GM12878 (cell line): ENCODE measurements at regions of chr17 and their contacts with region 1.

Region 1: DNA sequence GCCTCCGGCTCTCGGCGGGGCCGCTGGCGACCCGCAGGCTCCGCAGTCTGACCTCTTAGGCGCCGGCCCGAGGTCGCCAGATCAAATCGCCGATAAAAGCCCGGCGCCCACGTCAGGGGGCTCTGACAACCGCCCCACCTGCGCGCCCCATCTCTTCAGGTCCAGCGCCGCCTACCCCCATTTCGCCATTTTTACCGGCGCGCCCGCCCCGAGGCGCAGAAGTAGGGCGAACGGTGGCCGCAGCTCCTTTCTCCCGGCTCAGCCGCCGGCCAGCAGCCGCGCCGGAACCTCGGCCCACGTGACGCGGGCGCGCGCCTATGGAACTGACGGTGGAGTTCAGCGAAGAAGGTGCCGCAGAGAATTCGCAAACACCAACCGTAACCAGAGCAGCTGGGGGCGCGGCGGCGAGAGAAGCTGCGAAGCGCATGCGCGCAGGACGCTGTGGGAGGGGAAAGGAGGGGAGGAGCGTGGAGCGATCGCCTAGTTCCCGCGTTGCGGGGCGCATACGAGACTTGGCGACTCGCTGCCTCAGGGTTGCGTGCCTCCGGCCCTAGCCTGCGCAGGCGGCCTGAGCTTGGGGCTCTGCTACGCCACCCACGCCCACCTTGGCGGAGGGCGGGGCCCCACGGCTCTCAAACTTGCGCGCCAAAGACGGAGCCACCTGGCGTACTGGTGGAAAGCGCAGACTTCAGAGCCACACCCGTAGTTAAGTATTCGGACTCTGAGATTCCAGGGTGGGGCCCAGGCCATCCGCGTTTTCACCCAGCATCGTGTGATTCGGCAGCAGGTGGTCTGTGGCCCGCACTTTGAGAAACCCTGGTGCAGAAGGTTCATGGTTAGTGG is at the start of gene TRIM37:
- DNase-seq: peak; percentile 99
- ATAC-seq: peak; percentile 96
- H3K4me3 ChIP-seq: peak within 1 kb of the TSS; percentile 90
- H3K27ac ChIP-seq: peak within 1 kb of the TSS; percentile 77
- H3K4me1 ChIP-seq: peaks cover 4% of the 10 kb centered on the region; the same call in 1 of the 2 replicates
- H3K27me3 ChIP-seq: no peaks in the 10 kb centered on the region
- CTCF ChIP-seq: 0 out of 6 replicates have a peak, but pooled peaks of 1 of the 3 experiments have one; percentile 4
- EP300 ChIP-seq: no peak
- POLR2A ChIP-seq: peak; percentile 73
- RAD21 ChIP-seq: no peak
- polyA plus RNA-seq, gene TRIM37: 4.8 to 6.7 TPM

Region 2: GRCh38 chr17:58900171-58900907 is 206.3 kb before region 1 on chr17:
- CTCF ChIA-PET with region 1: no interaction called
- POLR2A ChIA-PET with region 1: no interaction called
- RAD21 ChIA-PET with region 1: no interaction called
- SMC1A ChIA-PET with region 1: no interaction called
- in situ Hi-C with region 1: no loop called
- intact Hi-C with region 1: no loop called
- DNase-seq: no peak
- ATAC-seq: no peak
- H3K4me3 ChIP-seq: no peak overlapping the region
- H3K27ac ChIP-seq: no peak overlapping the region
- H3K4me1 ChIP-seq: no peaks in the 10 kb centered on the region
- H3K27me3 ChIP-seq: no peaks in the 10 kb centered on the region
- CTCF ChIP-seq: no peak
- EP300 ChIP-seq: no peak
- POLR2A ChIP-seq: no peak
- RAD21 ChIP-seq: no peak

Region 3: DNA sequence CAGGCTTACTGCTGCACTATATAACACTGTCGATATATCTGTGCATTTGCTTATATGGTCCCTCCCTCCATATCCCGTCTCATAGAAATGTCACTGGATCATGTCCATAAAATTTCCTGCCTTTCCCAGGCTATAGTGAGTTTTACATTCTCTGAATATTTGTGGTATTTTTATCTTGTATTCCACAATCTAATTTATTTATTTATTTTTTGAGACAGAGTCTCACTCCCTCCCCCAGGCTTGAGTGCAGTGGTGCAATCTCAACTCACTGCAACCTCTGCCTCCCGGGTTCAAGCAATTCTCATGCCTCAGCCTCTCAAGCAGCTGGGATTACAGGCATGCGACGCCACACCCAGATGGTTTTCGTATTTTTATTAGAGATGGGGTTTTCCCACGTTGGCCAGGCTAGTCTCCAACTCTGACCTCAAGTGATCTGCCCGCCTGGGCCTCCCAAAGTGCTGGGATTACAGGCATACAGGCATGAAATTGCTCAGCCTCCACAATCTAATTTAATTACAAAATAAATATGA is 12.9 kb before region 1 on chr17:
- CTCF ChIA-PET with region 1: interaction called, 5 read pairs
- POLR2A ChIA-PET with region 1: interaction called, 5 read pairs
- RAD21 ChIA-PET with region 1: interaction called, 11 read pairs
- SMC1A ChIA-PET with region 1: interaction called, 6 read pairs
- in situ Hi-C with region 1: no loop called
- intact Hi-C with region 1: no loop called
- DNase-seq: no peak
- ATAC-seq: peak; percentile 87
- H3K4me3 ChIP-seq: no peak overlapping the region
- H3K27ac ChIP-seq: no peak overlapping the region
- H3K4me1 ChIP-seq: peaks cover 9% of the 10 kb centered on the region
- H3K27me3 ChIP-seq: no peaks in the 10 kb centered on the region
- CTCF ChIP-seq: no peak
- EP300 ChIP-seq: no peak
- POLR2A ChIP-seq: no peak
- RAD21 ChIP-seq: no peak

Region 4: GRCh38 chr17:59155439-59156182 is 48.9 kb after region 1 on chr17 and contains the start of gene PRR11:
- CTCF ChIA-PET with region 1: interaction called, 4 read pairs
- POLR2A ChIA-PET with region 1: interaction called, 8 read pairs
- RAD21 ChIA-PET with region 1: interaction called, 11 read pairs
- SMC1A ChIA-PET with region 1: interaction called, 7 read pairs
- in situ Hi-C with region 1: no loop called
- intact Hi-C with region 1: loop called (anchors 2 kb)
- DNase-seq: no peak
- ATAC-seq: peak; percentile 92
- H3K4me3 ChIP-seq: peak within 1 kb of the TSS; percentile 88
- H3K27ac ChIP-seq: peak within 1 kb of the TSS; percentile 92
- H3K4me1 ChIP-seq: peaks cover 14% of the 10 kb centered on the region
- H3K27me3 ChIP-seq: no peaks in the 10 kb centered on the region
- CTCF ChIP-seq: no peak
- EP300 ChIP-seq: peak in 1 of 2 experiments; percentile 28; a peak in 1 of 4 replicates
- POLR2A ChIP-seq: no peak; the same call in 1 of the 2 replicates
- RAD21 ChIP-seq: no peak
- polyA plus RNA-seq, gene PRR11: 32.6 to 49.8 TPM

Region 5: GRCh38 chr17:59190806-59191205 is 84.1 kb after region 1 on chr17:
- CTCF ChIA-PET with region 1: no interaction called
- POLR2A ChIA-PET with region 1: no interaction called
- RAD21 ChIA-PET with region 1: no interaction called
- SMC1A ChIA-PET with region 1: no interaction called
- in situ Hi-C with region 1: no loop called
- intact Hi-C with region 1: no loop called
- DNase-seq: no peak
- ATAC-seq: no peak
- H3K4me3 ChIP-seq: no peak overlapping the region
- H3K27ac ChIP-seq: no peak overlapping the region
- H3K4me1 ChIP-seq: no peaks in the 10 kb centered on the region
- H3K27me3 ChIP-seq: no peaks in the 10 kb centered on the region
- CTCF ChIP-seq: no peak
- EP300 ChIP-seq: no peak
- POLR2A ChIP-seq: no peak
- RAD21 ChIP-seq: no peak